SK-N-SH (cell line): ENCODE measurements at regions of chr17 and their contacts with region 1.

Region 1: DNA sequence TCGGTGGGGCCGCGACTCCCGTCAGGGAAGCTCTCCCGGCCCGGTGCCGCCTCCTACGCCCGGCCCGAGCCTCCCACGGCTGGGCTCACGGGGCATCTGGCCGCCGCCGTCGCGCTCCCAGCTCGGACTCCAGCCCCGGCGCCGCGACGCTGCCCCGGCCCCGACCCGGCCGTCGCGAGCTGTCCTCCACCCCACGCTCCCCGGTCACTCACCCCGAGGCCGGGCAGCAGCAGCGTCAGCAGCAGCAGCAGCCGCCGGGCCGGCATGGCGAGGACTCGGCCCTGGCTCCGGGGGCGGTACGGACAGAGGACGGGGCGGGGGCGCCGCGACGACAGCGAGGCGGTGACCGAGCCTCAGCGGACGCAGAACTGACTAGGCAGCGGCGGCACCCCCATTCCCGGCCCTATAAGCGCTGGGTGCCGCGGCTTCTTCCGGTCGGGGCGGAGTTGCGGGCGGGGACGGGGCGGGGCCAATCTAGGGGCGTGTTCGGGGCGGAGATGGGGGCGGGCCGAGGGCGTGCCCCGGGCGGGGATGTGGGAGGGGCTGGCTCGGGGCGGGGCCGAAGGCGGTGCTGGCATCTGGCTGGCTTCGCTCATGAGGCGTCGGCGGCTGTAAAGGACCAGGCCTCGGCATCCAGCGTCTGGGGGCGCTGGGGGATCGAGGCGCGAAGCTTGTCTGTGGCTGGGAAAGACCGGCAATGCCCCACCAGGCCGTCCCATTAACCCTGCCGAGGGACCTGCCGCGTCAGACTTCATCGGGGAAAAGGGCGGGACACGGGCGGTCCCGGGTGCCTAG is at the start of gene ERN1:
- DNase-seq: peak; percentile 99
- H3K4me3 ChIP-seq: peak within 1 kb of the TSS; percentile 72 to 82
- H3K27ac ChIP-seq: peak within 1 kb of the TSS; percentile 62 to 68
- H3K4me1 ChIP-seq: peaks cover 13 to 18% of the 10 kb centered on the region in 2 experiments; a peak in 3 of 4 replicates
- H3K27me3 ChIP-seq: no peaks in the 10 kb centered on the region
- CTCF ChIP-seq: 0 out of 2 replicates have a peak, but pooled peaks have one; percentile 8
- EP300 ChIP-seq: no peak
- RAD21 ChIP-seq: 0 out of 2 replicates have a peak, but pooled peaks have one; percentile 23
- polyA plus RNA-seq, gene ERN1: 6.9 and 7.3 TPM in 2 replicates

Region 2: DNA sequence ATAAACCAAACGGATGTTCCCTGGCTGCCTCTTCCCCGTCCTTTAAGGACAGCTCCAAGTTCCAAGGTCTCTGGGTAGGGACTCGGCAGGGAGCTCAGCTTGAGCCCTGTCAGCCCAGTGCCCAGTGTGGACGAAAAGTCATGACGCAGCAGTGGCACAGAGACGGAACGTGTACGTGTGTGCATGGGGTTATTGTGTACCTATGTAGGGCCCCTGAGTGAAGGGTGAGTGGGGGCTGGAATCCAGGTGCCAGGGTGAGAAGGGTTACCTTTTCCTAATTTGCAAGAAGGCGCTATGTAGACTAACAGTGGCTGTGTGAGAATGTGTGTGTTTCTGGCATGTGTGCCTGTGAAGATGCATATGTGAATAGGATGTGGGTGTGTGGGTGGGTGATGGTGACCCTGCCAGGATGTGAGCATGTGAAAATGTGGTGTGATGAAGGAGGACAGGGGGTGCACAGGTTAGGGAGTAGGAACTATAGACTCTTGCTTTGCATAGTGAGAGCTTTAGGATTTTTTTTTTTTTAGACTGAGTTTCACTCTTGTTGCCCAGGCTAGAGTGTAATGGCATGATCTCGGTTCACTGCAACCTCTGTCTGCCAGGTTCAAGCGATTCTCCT is 163.2 kb before region 1 on chr17:
- CTCF ChIA-PET with region 1: interaction called, 11 read pairs
- POLR2A ChIA-PET with region 1: no interaction called
- DNase-seq: no peak
- H3K4me3 ChIP-seq: no peak overlapping the region
- H3K27ac ChIP-seq: no peak overlapping the region
- H3K4me1 ChIP-seq: no peaks in the 10 kb centered on the region
- H3K27me3 ChIP-seq: no peaks in the 10 kb centered on the region
- CTCF ChIP-seq: no peak
- EP300 ChIP-seq: no peak
- RAD21 ChIP-seq: no peak

Region 3: DNA sequence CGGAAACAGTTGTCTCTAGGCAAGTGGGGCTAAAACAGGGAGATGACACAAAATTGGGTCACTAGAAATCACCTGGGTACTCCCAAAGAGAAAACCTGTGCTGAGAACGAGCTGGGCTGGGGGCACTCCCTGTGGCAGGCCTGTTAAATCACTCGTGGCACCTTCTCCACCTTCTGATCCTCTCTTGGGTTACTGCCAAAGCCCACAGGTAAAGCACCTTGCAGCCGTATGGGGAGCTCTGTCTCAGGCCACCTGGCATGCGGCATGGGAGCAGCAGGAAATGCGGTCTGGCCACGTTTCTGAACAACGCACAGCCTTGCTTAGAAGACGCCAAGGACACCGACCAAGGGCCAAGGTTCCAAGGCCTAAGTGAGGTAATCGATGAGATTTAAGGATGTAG is 88.0 kb before region 1 on chr17:
- CTCF ChIA-PET with region 1: interaction called, 46 read pairs
- POLR2A ChIA-PET with region 1: no interaction called
- DNase-seq: no peak
- H3K4me3 ChIP-seq: no peak overlapping the region
- H3K27ac ChIP-seq: no peak overlapping the region
- H3K4me1 ChIP-seq: no peaks in the 10 kb centered on the region
- H3K27me3 ChIP-seq: no peaks in the 10 kb centered on the region
- CTCF ChIP-seq: no peak
- EP300 ChIP-seq: no peak
- RAD21 ChIP-seq: no peak

Region 4: GRCh38 chr17:64081802-64082799 is 47.9 kb before region 1 on chr17:
- CTCF ChIA-PET with region 1: interaction called, 74 read pairs
- POLR2A ChIA-PET with region 1: interaction called, 7 read pairs
- DNase-seq: peak; percentile 76
- H3K4me3 ChIP-seq: no peak overlapping the region
- H3K27ac ChIP-seq: peak overlapping the region; percentile 14 to 87; a peak in 3 of 4 replicates
- H3K4me1 ChIP-seq: peaks cover 12 to 26% of the 10 kb centered on the region in 2 experiments
- H3K27me3 ChIP-seq: no peaks in the 10 kb centered on the region
- CTCF ChIP-seq: peak; percentile 15; the same call in 1 of the 2 replicates
- EP300 ChIP-seq: no peak
- RAD21 ChIP-seq: peak; percentile 46

Region 5: DNA sequence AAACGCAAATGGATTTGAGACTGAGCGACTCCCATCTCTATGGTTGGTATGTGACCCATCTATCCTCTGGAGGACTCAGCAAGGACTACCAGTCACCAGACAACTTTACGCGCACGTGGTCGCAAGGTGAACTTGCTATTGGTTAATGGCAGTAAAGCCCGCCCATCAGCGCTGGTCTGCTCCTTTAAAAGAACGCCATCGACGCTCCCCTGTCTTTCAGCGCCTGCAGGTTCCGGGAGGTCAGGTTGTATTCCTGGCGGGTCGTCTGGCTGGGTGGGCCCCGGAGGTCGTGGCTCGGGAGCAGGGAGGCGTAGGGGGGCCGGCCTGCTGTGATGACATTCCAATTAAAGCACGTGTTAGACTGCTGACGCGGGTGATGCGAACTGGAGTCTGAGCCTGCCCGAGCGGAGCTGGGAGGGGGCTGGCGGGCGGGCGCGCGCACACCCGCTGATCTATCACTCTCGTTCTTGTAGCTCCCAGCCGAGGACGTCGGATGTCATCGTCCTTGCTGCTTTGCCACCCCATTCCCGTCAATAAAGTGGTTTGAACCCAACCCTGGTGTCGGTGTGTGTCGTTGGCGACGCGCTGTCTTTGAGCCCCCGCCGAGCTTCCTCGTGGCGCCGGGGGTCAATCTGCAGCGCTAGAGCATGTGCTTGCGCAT is 15.9 kb after region 1 on chr17:
- CTCF ChIA-PET with region 1: interaction called, 41 read pairs
- POLR2A ChIA-PET with region 1: interaction called, 40 read pairs
- DNase-seq: peak; percentile 96
- H3K4me3 ChIP-seq: peak overlapping the region; percentile 73 to 80
- H3K27ac ChIP-seq: peak overlapping the region; percentile 65 to 97
- H3K4me1 ChIP-seq: peaks cover 11 to 28% of the 10 kb centered on the region in 2 experiments
- H3K27me3 ChIP-seq: no peaks in the 10 kb centered on the region
- CTCF ChIP-seq: no peak; the same call in 1 of the 2 replicates
- EP300 ChIP-seq: no peak
- RAD21 ChIP-seq: no peak

Region 6: DNA sequence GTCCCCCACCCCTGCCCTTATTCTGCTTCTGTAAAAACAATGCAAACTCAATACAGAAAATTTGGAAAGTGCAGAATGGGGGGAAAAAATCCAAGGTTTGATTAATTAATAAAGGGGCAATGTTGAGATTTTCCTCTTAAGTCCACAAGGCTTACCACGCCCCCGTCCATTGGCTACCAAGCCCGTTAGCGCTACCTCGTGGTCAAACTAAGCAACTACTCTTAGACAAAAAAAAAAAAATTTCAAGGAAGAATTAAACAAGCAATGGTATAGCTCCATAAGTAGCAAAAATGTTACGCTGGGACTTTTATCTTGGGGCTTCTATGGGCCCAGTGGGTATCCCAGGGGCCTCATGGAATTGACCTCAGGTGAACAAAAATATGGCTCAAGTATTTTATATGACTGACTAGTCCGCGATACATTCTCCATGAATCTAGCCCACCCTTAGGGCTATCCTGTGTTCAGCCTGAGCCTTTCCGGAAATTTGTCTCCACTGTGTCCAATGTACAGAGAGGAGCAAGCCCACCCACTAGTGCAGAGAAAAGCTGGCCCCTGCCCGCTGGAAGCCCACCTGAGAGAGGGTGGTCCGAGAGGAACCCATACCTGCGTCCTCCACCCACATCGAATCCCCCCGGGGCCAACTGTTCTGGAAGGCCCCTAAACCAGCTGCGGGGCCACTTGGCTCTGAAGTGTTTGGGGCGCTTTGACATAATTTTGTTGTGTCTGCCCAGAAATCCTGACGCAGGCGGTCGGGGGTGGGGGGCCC is 152.2 kb after region 1 on chr17:
- CTCF ChIA-PET with region 1: interaction called, 47 read pairs
- POLR2A ChIA-PET with region 1: no interaction called
- DNase-seq: peak; percentile 80
- H3K4me3 ChIP-seq: no peak overlapping the region
- H3K27ac ChIP-seq: no peak overlapping the region
- H3K4me1 ChIP-seq: peaks cover 0 to 3% of the 10 kb centered on the region in 2 experiments; a peak in 1 of 4 replicates
- H3K27me3 ChIP-seq: no peaks in the 10 kb centered on the region
- CTCF ChIP-seq: peak; percentile 99
- EP300 ChIP-seq: no peak
- RAD21 ChIP-seq: peak; percentile 100